Activated naive CD4-positive, alpha-beta T cell treated with anti-CD3 and anti-CD28 coated beads for 36 hours (primary cell): ENCODE measurements at regions of chr14 and their contacts with region 1.

Region 1: GRCh38 chr14:90970167-90970600 is 90.3 kb downstream of the RPS6KA5 start:
- DNase-seq: no peak
- H3K4me3 Mint-ChIP-seq: peak overlapping the region; percentile 47
- H3K27ac Mint-ChIP-seq: peak overlapping the region; percentile 88
- H3K4me1 Mint-ChIP-seq: peaks cover 41% of the 10 kb centered on the region
- H3K27me3 Mint-ChIP-seq: no peaks in the 10 kb centered on the region

Region 2: GRCh38 chr14:90903101-90903500 is 67.1 kb before region 1 on chr14:
- CTCF ChIA-PET with region 1: interaction called, 5 read pairs
- intact Hi-C with region 1: loop called (anchors 1 kb)
- DNase-seq: peak; percentile 81
- H3K4me3 Mint-ChIP-seq: no peak overlapping the region
- H3K27ac Mint-ChIP-seq: no peak overlapping the region
- H3K4me1 Mint-ChIP-seq: peaks cover 25% of the 10 kb centered on the region
- H3K27me3 Mint-ChIP-seq: no peaks in the 10 kb centered on the region

Region 3: DNA sequence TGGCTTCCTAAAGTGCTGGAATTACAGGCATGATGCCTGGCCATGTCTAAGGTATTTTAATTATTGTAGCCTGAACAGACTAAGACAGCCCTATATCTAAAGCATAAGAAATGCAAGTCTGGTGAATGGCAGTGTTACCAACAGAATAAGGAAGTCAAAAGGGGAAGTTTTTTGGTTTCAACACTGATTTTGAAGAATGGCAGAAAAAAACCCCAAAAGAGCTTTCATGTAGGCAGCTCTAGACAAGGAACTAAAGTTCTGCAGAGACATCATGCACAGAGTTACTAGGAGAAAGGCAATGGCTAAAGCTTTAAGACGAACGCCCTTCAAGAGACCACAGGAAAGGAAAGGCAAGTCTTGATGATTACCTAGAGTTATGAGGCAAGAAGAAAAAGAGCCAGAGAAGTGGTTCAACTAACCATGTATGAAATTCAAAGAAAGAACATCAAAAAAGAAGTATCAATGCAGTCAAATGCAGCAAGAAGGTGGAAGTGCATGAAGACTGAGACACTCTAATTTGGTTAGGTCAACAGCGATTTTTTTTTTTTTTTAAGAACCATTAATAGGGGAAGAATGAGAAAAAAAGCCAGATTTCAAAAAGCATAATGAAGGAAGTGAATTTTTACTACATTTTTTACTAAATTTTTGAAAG is 39.4 kb after region 1 on chr14:
- CTCF ChIA-PET with region 1: interaction called, 6 read pairs
- intact Hi-C with region 1: loop called (anchors 1 kb)
- DNase-seq: no peak
- H3K4me3 Mint-ChIP-seq: no peak overlapping the region
- H3K27ac Mint-ChIP-seq: peak overlapping the region; percentile 3
- H3K4me1 Mint-ChIP-seq: peaks cover 40% of the 10 kb centered on the region
- H3K27me3 Mint-ChIP-seq: no peaks in the 10 kb centered on the region

Region 4: GRCh38 chr14:91078095-91078737 is 108.0 kb after region 1 on chr14:
- CTCF ChIA-PET with region 1: no interaction called
- intact Hi-C with region 1: loop called (anchors 1 kb)
- DNase-seq: peak; percentile 77
- H3K4me3 Mint-ChIP-seq: no peak overlapping the region
- H3K27ac Mint-ChIP-seq: peak overlapping the region; percentile 39
- H3K4me1 Mint-ChIP-seq: peaks cover 29% of the 10 kb centered on the region
- H3K27me3 Mint-ChIP-seq: peaks cover 3% of the 10 kb centered on the region

Region 5: DNA sequence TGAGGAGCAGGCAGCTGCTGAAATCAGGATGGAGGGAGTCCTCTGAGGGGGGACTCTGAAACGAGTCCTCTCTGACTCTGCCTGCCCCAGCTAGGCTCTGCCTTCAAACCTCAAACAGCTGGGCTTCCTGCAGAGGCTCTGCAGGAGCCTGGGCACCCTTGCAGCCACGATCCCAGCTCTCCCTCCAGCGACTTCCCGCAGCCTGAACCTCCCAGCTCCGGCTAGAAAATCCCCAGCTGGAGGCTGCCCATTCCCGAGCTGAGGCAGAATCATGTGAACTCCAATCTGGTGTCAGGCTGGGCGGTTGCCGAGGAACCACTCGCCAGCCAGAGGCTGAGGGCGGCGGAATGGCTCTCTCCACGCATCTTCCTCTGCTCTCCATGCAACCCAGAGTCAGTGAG is 274.3 kb after region 1 on chr14 and contains the start of gene GPR68:
- CTCF ChIA-PET with region 1: no interaction called
- intact Hi-C with region 1: loop called (anchors 1 kb)
- DNase-seq: peak; percentile 39
- H3K4me3 Mint-ChIP-seq: peak within 1 kb of the TSS; percentile 55
- H3K27ac Mint-ChIP-seq: peak within 1 kb of the TSS; percentile 97
- H3K4me1 Mint-ChIP-seq: peaks cover 81% of the 10 kb centered on the region
- H3K27me3 Mint-ChIP-seq: no peaks in the 10 kb centered on the region
- total RNA-seq, gene GPR68: 1.2 to 1.3 TPM

Region 6: DNA sequence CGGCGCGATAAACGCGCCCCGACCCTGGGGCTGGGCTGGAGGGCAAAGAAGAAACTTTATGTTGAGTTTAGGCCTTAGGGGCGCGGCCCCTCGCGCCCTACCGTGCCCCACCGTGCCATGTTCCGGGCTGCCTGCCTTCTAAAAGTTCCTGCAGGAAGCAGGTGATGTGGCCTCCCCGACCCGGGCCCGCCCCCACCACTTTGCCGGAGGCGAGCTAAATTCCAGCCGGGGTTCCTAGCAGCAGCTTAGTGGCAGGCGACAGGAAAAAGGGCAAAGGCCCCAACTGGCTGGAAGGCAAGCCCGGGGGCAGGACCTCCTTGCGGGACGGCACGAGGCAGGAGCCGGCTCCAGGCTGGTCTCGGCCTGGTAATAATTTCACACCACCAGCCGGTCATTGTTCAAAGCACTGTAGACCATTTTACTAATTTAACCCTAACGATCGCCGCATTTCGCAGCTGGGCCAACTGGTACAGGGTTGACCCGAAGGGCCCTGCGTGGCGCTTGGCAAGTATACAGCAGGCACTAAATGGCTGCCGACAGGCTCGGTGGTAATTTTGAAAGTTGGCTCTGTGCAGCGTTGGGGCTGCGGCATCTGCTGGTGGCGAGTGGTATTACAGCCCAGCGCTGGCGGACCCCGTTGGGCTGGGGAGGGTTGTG is 448.3 kb after region 1 on chr14:
- CTCF ChIA-PET with region 1: no interaction called
- intact Hi-C with region 1: loop called (anchors 5 kb)
- DNase-seq: peak; percentile 84
- H3K4me3 Mint-ChIP-seq: peak overlapping the region; percentile 64
- H3K27ac Mint-ChIP-seq: peak overlapping the region; percentile 74
- H3K4me1 Mint-ChIP-seq: peaks cover 32% of the 10 kb centered on the region
- H3K27me3 Mint-ChIP-seq: no peaks in the 10 kb centered on the region